ENCODE measurements at regions of chr12 and their contacts with region 1.

Region 1: DNA sequence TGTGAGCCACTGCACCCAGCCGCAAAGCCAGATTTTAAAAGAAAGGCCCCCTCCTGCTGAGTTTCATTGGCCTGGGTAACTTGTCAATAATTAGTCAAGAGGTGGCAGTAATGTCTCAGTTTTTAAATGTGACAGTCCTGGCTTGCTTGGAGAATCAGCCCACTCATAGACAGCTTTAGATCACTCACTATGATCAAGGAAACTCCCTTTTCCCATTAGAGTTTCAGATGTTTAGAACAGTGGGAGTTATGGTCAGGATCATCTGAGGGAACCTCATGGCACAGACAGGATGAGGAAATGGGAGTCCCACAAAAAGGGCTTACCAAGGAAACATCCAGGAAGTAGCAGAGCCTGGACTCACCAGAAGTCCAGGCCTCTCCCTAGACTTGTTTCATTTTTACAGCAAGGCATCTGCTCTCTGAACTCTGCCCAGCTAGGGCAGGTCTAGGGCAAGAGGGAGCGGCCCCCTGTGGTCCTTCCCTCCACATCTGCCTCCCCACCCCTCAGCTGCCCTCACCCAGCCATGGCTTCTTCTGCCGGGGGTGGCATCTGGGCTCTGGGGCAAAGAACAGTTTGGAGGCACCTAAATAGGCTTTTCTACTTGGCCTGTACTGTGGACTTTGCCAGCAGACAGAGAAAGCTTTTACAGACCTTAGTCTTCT is 11.2 kb downstream of the BCL2L14 start:
- DNase-seq: peak; percentile 79
- H3K4me3 ChIP-seq: no peak overlapping the region
- H3K27ac ChIP-seq: peak overlapping the region; percentile 40
- H3K4me1 ChIP-seq: peaks cover 5% of the 10 kb centered on the region
- H3K27me3 ChIP-seq: no peaks in the 10 kb centered on the region
- CTCF ChIP-seq: peak; percentile 17 to 29
- POLR2A ChIP-seq: no peak

Region 2: DNA sequence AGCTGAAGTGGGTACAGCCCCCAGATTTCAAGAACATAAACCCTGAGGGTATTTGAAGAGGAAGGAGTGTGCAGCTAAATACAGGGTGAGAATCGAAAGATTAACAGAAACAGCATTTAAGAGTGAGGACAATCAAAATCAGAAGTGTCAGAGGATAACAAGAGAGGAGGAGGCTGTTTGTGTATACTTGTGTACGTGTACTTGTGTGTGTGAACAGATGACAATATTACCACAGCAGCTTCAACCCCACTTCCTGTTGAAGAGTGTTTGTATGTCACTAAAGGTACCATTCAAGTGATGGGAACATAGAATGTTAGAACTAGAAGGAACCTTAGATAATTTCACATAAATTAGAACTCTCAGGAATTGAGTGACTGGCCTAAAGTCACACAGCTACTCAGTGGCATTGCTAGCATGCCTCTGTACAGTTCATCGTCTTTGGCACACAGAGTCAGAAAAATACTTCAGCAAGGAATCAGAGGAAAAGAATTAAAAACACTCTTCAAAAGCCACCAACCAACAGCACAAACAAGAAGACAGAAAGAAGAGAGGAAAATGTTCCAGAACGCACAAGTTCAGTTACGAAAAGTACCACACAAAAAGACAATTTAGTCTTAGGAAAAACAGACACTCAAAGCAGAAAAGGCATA is 175.6 kb before region 1 on chr12:
- CTCF ChIA-PET with region 1: no interaction called
- POLR2A ChIA-PET with region 1: no interaction called
- dilution Hi-C with region 1: no loop called
- intact Hi-C with region 1: no loop called
- DNase-seq: no peak
- H3K4me3 ChIP-seq: no peak overlapping the region
- H3K27ac ChIP-seq: no peak overlapping the region
- H3K4me1 ChIP-seq: no peaks in the 10 kb centered on the region
- H3K27me3 ChIP-seq: peaks cover 2 to 14% of the 10 kb centered on the region in 2 experiments
- CTCF ChIP-seq: no peak
- POLR2A ChIP-seq: no peak

Region 3: GRCh38 chr12:12356886-12357718 is 275.1 kb after region 1 on chr12 and contains the start of gene BORCS5:
- CTCF ChIA-PET with region 1: interaction called, 13 read pairs
- POLR2A ChIA-PET with region 1: no interaction called
- dilution Hi-C with region 1: no loop called
- intact Hi-C with region 1: no loop called
- DNase-seq: peak; percentile 90
- H3K4me3 ChIP-seq: peak within 1 kb of the TSS; percentile 45 to 89 (median 76)
- H3K27ac ChIP-seq: peak within 1 kb of the TSS; percentile 71
- H3K4me1 ChIP-seq: peaks cover 11% of the 10 kb centered on the region
- H3K27me3 ChIP-seq: no peaks in the 10 kb centered on the region
- CTCF ChIP-seq: peak in 1 of 2 donors; percentile 31
- POLR2A ChIP-seq: peak; percentile 93
- total RNA-seq, gene BORCS5: 10.5 and 11.5 TPM in 2 replicates